Vagina (tissue), 2 donors: ENCODE measurements at regions of chr3 and their contacts with region 1.

Region 1: DNA sequence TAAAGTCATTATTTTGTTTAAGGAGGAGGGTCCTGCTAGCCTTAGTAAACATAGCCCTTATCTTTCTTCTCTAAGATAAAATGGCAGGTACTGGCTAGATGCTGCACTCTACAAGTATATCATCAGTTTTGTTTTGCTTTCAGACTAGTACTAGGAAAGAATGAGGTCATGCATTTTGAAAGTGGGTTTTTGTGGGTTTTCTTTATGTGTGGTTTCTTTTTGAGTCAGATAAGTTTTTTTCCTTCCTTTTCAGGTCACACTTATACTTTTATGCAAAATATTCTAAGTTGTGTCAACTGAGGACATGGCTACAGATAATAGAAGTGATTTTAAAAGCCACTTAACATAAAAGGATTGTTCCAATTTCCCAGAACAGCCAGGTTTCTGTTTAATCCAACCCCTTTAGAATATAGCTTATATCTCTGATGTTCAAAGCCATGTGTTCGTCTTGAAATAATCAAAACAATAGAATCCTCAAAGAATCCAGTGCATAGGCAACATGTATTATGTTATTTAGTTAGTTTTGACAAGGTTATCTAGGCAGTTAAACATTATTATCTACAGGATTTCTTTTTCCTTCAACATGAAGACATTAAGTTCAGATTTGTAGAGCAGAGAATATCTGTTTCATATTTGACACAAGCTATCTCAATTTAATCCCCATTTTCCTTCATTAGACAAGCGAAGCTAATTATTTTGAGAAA is 406.2 kb downstream of the RBMS3 start:
- DNase-seq: no peak
- H3K4me3 ChIP-seq: no peak overlapping the region
- H3K27ac ChIP-seq: no peak overlapping the region
- H3K4me1 ChIP-seq: peaks cover 15% of the 10 kb centered on the region
- H3K27me3 ChIP-seq: no peaks in the 10 kb centered on the region
- CTCF ChIP-seq: no peak
- POLR2A ChIP-seq: no peak

Region 2: GRCh38 chr3:29335438-29335837 is 351.6 kb before region 1 on chr3:
- intact Hi-C with region 1: loop called (anchors 5 kb)
- DNase-seq: no peak
- H3K4me3 ChIP-seq: peak overlapping the region; percentile 8 to 17
- H3K27ac ChIP-seq: peak overlapping the region; percentile 69
- H3K4me1 ChIP-seq: peaks cover 48% of the 10 kb centered on the region
- H3K27me3 ChIP-seq: no peaks in the 10 kb centered on the region
- CTCF ChIP-seq: no peak
- POLR2A ChIP-seq: no peak